Activated CD4-positive, alpha-beta T cell treated with anti-CD3 and anti-CD28 coated beads for 36 hours (primary cell): ENCODE measurements at regions of chr13 and their contacts with region 1.

Region 1: DNA sequence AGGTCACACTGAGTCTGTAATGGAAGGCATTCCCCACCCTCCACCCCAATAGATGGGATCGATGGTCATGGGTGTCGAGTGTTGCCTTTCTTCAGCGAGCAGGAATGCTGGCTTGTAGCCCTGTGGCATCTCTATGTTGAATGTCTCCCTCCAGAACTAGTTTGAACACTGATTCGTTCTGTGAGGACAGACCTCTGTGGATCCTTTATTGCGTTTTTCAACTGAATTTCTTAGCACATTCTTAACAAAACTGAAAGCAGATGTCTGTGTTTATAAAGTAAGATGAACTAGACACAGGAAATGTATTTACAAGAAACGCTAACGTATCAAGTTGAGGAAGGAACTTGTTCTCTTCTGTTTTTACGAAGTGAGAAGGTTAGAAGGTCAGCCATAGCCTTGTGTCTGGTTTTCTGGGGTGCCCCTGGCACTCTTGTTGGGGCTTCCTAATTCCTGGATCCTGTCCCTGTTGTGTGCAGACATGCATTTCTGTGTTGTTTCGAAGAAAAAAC is 36.8 kb upstream of the TM9SF2 start:
- DNase-seq: no peak
- ATAC-seq: peak; percentile 84
- H3K4me3 Mint-ChIP-seq: peak overlapping the region; percentile 20
- H3K27ac Mint-ChIP-seq: peak overlapping the region; percentile 89
- H3K4me1 Mint-ChIP-seq: peaks cover 30% of the 10 kb centered on the region
- H3K27me3 Mint-ChIP-seq: peaks cover 3% of the 10 kb centered on the region

Region 2: DNA sequence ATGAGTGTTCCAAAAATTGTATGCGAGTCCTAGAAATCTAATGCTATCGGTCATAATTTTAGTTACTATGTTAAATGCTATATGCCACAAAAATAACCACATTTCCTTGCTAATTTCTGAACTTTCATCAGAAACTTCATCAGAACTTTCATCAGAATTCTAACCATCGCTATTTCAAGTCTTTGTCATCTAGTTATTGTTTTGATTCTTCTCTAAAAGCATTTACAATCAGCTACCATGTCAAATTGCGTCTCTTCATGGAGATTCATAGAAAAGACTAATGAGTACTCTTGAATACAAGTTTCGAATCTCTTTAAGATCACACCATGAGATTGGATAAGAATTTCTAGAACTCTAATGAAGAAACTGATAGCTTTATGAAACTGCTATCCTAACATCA is 15.9 kb before region 1 on chr13:
- CTCF ChIA-PET with region 1: interaction called, 7 read pairs
- POLR2A ChIA-PET with region 1: interaction called, 3 read pairs
- intact Hi-C with region 1: loop called in 1 of 2 experiments (anchors 2 kb)
- DNase-seq: no peak
- ATAC-seq: peak; percentile 63
- H3K4me3 Mint-ChIP-seq: no peak overlapping the region
- H3K27ac Mint-ChIP-seq: no peak overlapping the region
- H3K4me1 Mint-ChIP-seq: peaks cover 19% of the 10 kb centered on the region
- H3K27me3 Mint-ChIP-seq: no peaks in the 10 kb centered on the region

Region 3: DNA sequence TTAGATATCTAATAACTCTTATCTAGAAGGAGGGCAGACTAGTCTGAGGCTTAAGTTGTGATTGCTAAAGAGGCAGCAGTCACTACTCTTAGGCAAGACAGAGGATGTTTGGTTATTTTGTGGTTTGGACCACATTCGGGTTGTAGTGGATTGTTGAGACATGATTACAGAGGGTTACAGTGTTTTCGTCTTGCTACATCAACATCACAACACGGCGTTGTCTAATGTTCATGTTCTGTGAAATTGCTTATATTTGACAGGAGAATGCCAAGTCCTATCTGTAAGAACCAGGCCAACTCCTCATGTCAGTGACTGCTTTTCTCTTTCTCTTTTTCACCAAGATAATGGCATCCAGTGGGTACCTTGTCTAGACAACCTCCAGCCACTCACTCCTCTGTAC is 20.0 kb after region 1 on chr13:
- CTCF ChIA-PET with region 1: interaction called, 10 read pairs
- POLR2A ChIA-PET with region 1: no interaction called
- intact Hi-C with region 1: no loop called
- DNase-seq: no peak
- ATAC-seq: no peak
- H3K4me3 Mint-ChIP-seq: no peak overlapping the region
- H3K27ac Mint-ChIP-seq: no peak overlapping the region
- H3K4me1 Mint-ChIP-seq: peaks cover 8% of the 10 kb centered on the region
- H3K27me3 Mint-ChIP-seq: no peaks in the 10 kb centered on the region

Region 4: DNA sequence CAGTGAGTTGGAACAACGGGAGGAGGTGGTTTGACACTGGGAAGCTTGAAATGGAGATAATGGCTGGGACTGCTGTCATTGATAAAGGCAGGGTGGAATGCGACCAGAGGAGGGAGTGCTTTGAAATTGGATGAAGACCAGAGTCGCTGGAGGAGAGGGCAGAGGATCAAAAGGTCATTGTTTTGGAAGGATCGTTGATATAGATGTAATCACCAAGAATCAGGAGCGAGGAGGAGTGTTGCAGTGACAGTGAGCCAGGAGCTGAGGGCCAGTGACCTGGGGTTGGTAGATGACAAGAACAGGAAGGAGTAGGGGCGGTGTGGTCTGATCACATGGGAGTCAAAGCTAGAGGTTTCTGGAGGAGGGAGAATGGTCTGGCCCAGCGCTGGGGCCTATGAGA is 62.1 kb after region 1 on chr13:
- CTCF ChIA-PET with region 1: no interaction called
- POLR2A ChIA-PET with region 1: no interaction called
- intact Hi-C with region 1: no loop called
- DNase-seq: peak; percentile 15
- ATAC-seq: peak; percentile 55
- H3K4me3 Mint-ChIP-seq: no peak overlapping the region
- H3K27ac Mint-ChIP-seq: peak overlapping the region; percentile 7
- H3K4me1 Mint-ChIP-seq: peaks cover 40% of the 10 kb centered on the region
- H3K27me3 Mint-ChIP-seq: no peaks in the 10 kb centered on the region